ENCODE measurements at regions of chr1 and their contacts with region 1.

Region 1: DNA sequence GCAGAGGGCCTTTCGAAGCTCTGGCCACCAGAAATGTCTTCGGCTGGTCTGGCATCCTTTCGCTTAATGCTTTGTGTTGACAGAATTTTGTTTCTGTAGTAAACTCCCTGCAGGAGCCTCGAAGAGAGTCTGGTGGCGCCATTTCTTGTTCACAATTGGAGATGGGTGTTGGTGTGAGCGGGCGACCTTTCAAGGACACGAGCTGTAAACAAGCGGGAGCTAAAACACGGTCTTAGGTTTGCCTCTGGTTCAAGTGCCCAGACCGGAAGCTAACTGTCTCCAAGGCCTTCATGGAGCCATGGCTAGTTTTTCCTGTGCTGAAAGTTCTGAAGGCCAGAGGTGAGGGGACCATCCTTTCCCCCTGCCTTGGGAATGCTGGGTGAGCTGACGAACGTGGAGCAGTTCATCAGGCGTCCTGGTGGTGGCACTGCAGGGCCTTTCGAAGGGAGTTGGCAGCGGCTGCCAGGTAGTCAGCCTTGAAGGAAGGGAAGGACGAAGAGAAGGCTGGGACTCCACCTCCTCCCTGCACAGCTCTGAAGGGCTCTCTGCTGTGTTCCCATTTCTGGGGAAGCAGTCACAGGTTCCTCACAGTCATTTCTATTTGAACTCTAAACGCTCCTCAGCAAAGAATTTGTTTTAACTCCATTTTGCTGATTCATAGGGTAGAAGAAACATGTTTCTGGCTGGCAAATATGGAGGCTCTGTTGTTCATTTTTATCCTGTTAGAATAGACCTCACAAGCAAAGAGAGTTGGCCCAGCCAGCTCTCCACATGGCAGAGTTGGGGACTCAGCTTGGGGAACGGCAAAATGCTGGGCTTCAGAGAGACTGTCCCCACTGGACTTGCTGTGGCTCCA is 35.2 kb downstream of the URB2 start:
- DNase-seq: peak; percentile 89
- H3K4me3 Mint-ChIP-seq: no peak overlapping the region
- H3K27ac Mint-ChIP-seq: peak overlapping the region; percentile 49
- H3K4me1 Mint-ChIP-seq: no peaks in the 10 kb centered on the region
- H3K27me3 Mint-ChIP-seq: no peaks in the 10 kb centered on the region
- CTCF ChIP-seq: peak; percentile 92

Region 2: DNA sequence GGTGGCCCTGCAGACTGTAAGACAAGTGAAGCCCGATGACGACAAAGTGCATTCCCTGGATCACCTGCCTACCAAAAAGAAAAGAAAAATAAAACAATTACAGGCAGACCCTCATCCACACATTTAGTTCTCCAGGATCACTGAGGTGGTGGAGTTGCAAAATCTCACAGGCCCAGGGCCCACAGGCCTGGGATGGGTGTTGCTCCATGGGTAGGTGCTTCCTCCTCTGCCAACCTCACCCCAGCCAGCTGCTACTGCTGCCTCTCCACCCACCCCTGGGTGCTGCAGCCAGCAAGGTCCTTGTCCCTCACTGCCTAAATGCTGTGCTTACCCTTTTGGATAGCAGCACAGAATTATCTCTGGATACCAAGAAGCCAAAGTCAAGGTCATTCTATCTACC is 259.4 kb after region 1 on chr1:
- CTCF ChIA-PET with region 1: no interaction called
- intact Hi-C with region 1: no loop called
- DNase-seq: no peak
- H3K4me3 Mint-ChIP-seq: no peak overlapping the region
- H3K27ac Mint-ChIP-seq: no peak overlapping the region
- H3K4me1 Mint-ChIP-seq: no peaks in the 10 kb centered on the region
- H3K27me3 Mint-ChIP-seq: peaks cover 28% of the 10 kb centered on the region
- CTCF ChIP-seq: no peak

Region 3: DNA sequence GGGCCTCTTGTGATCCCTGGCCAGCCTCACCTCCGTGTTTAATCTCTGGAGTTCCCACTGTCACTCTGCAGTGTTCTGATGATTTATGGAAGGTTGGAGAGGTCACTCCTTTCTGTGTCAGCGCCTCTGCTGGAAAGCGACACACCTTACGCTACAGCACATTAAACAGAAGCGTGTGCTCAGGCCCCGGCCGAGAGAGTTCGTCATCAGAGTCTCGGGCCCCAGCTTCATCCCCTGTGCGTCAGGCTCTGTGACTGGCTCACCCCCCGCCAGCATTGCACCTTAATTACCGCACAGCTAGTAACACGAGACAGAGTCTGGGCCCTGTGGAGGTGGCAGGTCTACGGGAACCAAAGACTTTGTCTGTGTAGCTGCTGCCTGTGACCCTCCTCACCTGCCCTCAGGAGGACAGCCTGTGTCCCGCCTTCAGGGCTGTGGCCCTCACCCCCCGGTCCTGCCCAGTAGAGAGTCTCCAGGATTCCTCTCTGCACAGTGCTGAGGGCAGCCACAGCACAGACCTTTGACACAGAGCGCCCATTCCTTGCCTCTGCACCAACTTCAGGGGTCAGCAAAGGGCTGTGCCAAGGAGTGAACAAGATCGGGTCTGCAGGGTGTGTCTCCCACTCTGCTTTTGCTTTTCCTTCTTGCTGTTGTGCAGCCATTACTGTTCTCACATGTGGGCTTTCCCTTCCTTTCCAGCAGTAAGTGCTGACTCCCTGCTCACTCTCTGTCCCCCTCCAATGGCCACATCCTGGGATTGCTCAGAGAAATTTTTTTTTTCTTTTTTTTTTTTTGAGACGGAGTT is 607.3 kb after region 1 on chr1:
- CTCF ChIA-PET with region 1: interaction called, 3 read pairs
- intact Hi-C with region 1: loop called (anchors 5 kb)
- DNase-seq: peak; percentile 57
- H3K4me3 Mint-ChIP-seq: no peak overlapping the region
- H3K27ac Mint-ChIP-seq: no peak overlapping the region
- H3K4me1 Mint-ChIP-seq: no peaks in the 10 kb centered on the region
- H3K27me3 Mint-ChIP-seq: no peaks in the 10 kb centered on the region
- CTCF ChIP-seq: peak; percentile 52

Region 4: GRCh38 chr1:230310381-230311163 is 649.3 kb after region 1 on chr1:
- CTCF ChIA-PET with region 1: interaction called, 4 read pairs
- intact Hi-C with region 1: loop called (anchors 2 kb)
- DNase-seq: peak; percentile 82
- H3K4me3 Mint-ChIP-seq: no peak overlapping the region
- H3K27ac Mint-ChIP-seq: peak overlapping the region; percentile 7
- H3K4me1 Mint-ChIP-seq: peaks cover 36% of the 10 kb centered on the region
- H3K27me3 Mint-ChIP-seq: no peaks in the 10 kb centered on the region
- CTCF ChIP-seq: peak; percentile 79

Measured in Calu3 (cell line).